Common myeloid progenitor, CD34-positive (primary cell): ENCODE measurements at regions of chr10 and their contacts with region 1.

Region 1: DNA sequence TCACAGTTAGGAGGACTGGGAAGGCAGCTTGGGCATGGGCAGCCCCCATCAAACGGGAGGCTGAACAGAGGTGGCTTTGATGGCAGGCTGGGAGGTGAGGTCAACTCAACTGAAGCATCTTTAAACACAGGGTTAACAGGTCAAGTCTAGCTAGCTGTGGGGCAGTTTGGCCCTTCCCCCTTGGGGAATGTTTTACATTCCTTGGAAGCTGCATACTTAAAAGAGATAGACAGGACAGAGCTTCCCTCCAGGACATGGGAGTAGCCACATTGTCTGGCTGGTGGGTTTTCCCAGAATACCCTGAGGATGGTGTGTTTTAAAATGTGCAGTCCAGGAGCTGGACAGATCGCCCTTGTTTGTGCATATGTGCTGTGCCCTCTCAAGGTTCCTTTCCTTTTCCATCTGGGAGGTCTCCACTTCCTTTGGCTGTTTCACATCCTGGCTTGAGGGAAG is 6.8 kb upstream of the RASSF4 start:
- DNase-seq: no peak
- H3K4me3 ChIP-seq: no peak overlapping the region
- H3K27ac ChIP-seq: no peak overlapping the region
- H3K4me1 ChIP-seq: peaks cover 12 to 19% (median 16%) of the 10 kb centered on the region in 4 experiments
- H3K27me3 ChIP-seq: no peaks in the 10 kb centered on the region

Region 2: DNA sequence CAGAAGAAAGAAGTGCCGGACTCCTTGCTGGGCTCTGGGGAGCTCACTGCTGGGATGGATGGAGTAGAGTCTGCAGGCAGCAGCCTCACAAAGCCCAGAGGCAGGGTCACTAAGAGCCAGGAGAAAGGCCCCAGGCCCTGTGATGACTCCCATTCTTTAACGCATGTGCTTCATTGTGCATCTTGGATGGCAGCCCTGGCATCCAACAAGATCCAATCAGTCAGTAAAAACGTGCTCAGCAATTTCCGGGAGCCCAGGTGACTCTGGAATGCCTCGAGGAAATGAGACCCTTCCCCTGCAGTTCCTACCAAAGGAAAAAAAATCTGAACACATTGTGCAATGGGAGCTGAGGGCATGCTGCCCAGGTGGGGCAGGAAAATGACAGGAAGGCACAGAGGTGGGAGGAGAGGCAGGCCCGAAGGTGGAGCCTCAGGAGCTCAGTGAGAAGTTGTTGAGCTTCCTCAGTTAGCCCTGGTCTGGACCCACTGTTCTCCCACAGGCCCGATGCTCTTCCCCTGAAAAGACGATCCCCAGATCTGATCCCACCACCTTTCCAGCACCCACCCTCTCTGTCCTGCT is 102.4 kb before region 1 on chr10:
- CTCF ChIA-PET with region 1: no interaction called
- POLR2A ChIA-PET with region 1: no interaction called
- DNase-seq: no peak
- H3K4me3 ChIP-seq: no peak overlapping the region
- H3K27ac ChIP-seq: no peak overlapping the region
- H3K4me1 ChIP-seq: no peaks in the 10 kb centered on the region
- H3K27me3 ChIP-seq: no peaks in the 10 kb centered on the region

Region 3: DNA sequence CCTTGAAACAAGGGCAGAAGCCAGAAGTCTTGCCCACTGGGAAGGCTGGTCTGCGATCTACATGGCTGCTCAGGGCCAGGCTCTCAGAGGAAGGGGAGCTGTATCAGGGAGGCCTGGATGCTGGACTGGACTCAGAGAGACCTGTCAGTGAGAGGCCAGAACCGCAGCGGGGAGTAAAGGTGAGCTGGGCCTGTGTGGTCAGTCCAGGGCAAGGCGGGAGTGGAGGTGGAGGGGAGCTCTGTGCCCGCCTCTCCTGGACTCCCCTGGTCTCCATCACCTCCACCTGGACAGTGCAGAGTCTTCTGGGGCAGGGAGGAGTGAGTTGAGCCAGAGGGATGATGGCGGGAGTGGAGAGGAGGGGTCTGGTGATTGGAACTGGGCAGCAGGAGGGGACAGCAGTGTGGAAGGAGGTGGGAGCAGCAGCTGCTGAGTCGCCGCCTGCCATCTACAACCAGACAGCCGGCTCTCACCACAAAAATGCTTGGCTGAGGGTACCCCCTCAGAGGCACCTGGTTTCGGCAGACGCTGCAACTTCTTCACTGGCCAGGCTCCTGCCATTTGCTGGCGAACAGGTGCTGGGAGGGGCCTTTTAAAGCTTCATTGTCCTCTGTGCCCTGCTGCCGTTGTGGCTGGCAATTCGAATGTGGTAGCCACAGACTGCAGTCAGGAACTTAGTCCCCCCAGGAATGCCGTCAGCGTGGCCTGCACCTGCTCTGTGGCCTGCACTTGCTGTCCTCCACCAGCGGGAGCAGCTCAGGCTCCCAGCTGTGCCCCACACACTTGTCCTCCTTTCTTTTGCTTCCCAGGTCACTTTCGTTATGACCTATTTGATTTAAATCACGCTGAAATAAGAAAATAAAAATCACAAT is 10.3 kb after region 1 on chr10:
- CTCF ChIA-PET with region 1: interaction called, 14 read pairs
- POLR2A ChIA-PET with region 1: interaction called, 4 read pairs
- DNase-seq: peak in 2 of 3 donors; percentile 42 to 50
- H3K4me3 ChIP-seq: no peak overlapping the region
- H3K27ac ChIP-seq: no peak overlapping the region
- H3K4me1 ChIP-seq: peaks cover 19 to 77% (median 40%) of the 10 kb centered on the region in 4 experiments
- H3K27me3 ChIP-seq: no peaks in the 10 kb centered on the region

Region 4: DNA sequence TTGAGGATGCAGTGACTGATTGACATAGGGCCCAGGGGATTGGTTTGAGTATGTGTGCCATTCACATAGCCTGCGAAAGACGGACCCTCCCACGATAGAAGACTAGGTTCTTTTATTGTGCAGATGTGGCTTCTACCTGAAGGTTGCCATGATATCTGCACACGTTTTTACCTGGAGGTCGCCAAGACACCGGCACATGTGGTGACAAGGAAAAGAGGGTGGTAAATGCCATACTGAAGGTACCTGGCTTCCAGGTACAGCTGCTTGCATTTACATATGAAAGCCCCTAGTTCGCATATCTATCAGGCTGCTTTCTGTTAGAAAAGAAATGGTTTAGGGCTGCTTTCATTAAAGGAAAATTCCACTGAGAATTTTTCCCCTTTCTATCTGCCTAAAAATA is 91.5 kb after region 1 on chr10:
- CTCF ChIA-PET with region 1: no interaction called
- POLR2A ChIA-PET with region 1: no interaction called
- DNase-seq: no peak
- H3K4me3 ChIP-seq: no peak overlapping the region
- H3K27ac ChIP-seq: no peak overlapping the region
- H3K4me1 ChIP-seq: no peaks in the 10 kb centered on the region
- H3K27me3 ChIP-seq: no peaks in the 10 kb centered on the region

Region 5: GRCh38 chr10:45096012-45096411 is 143.2 kb after region 1 on chr10:
- CTCF ChIA-PET with region 1: no interaction called
- POLR2A ChIA-PET with region 1: no interaction called
- DNase-seq: no peak
- H3K4me3 ChIP-seq: no peak overlapping the region
- H3K27ac ChIP-seq: no peak overlapping the region
- H3K4me1 ChIP-seq: peaks cover 4 to 14% (median 10%) of the 10 kb centered on the region in 4 experiments
- H3K27me3 ChIP-seq: peaks cover 0 to 6% (median under 1%) of the 10 kb centered on the region in 5 experiments